Cardiac septum (tissue), 1 donor: ENCODE measurements at regions of chr2 and their contacts with region 1.

Region 1: DNA sequence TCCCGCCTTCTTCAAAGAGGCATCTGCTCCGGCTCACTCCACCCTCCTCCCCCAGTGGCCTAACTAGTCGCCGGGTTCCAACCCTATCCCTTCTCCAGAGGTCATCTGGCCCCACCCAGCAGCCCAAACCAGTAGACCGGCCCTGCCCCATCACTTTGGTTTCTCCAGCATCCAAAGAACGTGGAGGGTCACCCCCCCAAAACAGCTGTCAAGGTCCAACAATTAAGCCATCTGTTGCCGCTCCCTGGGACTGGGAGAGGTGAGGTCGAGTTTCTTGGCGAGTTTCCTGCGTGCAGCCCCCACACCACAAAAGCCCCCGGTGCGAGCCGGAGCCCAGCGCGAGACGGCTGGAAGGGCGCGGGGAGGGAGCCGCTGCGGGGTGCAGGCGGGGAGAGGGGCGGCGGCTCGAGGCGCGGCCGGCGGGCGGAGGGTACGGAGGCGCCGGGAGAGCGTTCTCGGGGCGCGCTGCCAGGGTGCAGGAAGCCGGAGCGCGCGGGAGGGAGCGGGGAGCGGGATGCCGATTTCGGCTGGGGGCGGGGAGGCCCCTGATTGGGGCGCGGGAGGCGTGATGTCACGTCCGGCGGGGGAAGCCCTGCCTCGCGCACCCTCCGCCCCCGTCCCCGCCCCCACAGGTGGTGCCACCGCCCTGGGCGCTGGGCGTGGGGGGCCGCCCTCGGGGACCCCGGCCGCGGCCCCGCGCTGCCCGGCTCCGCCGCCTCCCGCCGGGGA is 571 bp upstream of the GPC1 start:
- DNase-seq: peak; percentile 94

Region 2: DNA sequence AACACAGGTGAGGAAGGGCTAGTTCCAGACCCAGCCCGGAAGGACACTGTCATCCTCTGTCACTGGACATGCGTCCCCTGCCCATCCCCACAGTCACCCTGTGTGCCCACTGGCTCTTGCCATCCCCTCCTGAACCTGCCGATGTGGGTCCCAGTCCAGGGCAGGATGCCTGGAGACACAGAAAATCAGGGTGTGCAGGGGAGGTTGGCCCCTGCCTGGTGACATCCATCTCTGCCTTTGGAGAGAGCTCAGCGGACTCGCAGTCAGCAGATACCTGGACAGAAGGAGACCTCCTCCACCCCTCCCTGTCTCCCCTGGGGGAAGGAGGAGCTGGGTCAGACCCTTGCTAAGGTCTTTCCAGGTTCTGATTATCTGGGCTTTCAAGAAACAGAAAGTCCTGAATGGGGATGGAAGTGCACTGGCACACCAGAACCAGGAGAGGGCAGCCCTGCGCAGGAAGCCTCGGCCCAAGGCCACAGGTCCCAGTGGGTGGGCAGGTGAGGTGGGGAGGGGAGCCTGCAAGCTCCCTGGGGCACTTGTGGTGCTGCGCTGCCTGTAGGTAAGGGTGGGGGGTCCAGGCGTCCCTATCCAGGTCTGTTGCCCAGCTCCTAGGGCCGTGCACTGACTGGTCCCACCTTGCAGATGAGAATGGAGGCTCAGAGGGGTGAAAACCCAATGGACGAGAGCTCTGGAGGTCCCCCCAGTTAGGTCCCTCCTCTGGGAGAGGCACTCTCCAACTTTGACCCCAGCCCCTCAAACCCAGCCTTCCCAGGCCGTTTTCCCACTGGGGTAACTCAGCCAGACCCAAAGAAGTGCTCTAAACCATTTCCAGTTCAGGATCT is 284.7 kb before region 1 on chr2:
- intact Hi-C with region 1: loop called (anchors 5 kb)
- DNase-seq: no peak

Region 3: GRCh38 chr2:240250985-240251847 is 183.7 kb before region 1 on chr2:
- intact Hi-C with region 1: loop called (anchors 5 kb)
- DNase-seq: peak; percentile 89

Region 4: GRCh38 chr2:240300261-240300821 is 134.6 kb before region 1 on chr2:
- intact Hi-C with region 1: loop called (anchors 2 kb)
- DNase-seq: peak; percentile 61

Region 5: GRCh38 chr2:240351826-240352426 is 83.0 kb before region 1 on chr2:
- intact Hi-C with region 1: loop called (anchors 2 kb)
- DNase-seq: no peak

Region 6: GRCh38 chr2:240369801-240370585 is 64.9 kb before region 1 on chr2:
- intact Hi-C with region 1: loop called (anchors 1 kb)
- DNase-seq: peak; percentile 91

Region 7: DNA sequence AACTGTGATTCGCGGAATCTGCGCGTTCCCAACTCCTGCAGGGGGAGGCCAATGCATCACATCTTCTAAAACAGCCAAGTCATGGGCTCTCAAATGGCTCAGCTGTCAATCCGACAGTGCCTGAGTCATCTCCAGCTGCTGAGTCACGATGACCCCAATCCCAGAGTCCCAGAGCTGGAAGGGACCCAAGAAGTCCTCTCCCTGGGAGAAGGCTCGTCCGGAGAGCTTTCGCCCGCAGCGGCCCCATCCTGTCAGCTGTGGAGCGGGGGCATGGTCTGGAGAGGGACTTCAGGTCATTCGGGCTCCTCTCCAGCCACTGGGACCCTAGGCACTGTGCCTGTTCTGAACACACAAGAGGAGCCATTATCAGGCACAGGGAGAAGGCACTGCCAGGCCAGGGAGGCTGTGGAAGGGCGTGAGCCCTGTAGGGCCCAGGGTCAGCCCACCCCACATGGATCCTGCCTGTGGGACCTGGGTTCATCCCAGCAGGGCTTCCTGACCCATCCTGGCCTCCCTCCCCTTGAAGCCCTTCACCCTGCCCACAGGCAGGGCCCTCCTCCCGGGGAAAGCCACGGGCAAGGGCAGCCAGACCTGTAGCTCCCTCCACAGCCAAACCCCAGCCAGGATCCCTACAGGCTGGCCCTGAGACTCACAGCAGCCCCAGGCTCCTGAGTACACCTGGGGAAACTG is 47.1 kb before region 1 on chr2:
- intact Hi-C with region 1: loop called (anchors 5 kb)
- DNase-seq: peak; percentile 79